ENCODE measurements at regions of chr3 and their contacts with region 1.

Region 1: DNA sequence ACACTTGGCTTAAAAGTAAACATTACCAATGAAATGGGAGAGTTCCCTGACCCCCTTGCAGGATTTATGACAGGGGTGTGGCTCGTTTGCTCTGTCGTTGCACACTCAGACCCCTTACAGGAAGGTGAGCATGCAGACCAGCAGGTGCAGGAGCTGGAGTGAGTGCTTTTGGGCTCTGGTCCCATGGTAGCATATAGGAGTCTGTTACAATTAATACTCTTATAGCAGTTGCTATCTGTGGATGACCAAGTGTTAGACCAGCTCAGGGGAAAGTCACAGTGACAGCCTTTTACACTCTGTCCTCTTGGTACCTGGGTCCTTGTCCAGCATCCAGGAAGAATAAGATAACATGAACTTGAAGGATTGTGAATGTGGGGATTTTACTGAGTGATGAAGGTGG is 1177.5 kb downstream of the NSUN3 start:
- DNase-seq: no peak
- ATAC-seq: no peak
- H3K4me3 ChIP-seq: no peak overlapping the region
- H3K4me3 Mint-ChIP-seq: no peak overlapping the region
- H3K27ac ChIP-seq: no peak overlapping the region
- H3K27ac Mint-ChIP-seq: no peak overlapping the region
- H3K4me1 ChIP-seq: no peaks in the 10 kb centered on the region
- H3K4me1 Mint-ChIP-seq: no peaks in the 10 kb centered on the region
- H3K27me3 ChIP-seq: no peaks in the 10 kb centered on the region
- H3K27me3 Mint-ChIP-seq: no peaks in the 10 kb centered on the region

Region 2: GRCh38 chr3:95254771-95255170 is 14.4 kb after region 1 on chr3:
- CTCF ChIA-PET with region 1: no interaction called
- POLR2A ChIA-PET with region 1: no interaction called
- intact Hi-C with region 1: loop called in 1 of 2 experiments (anchors 1 kb)
- DNase-seq: no peak
- ATAC-seq: no peak
- H3K4me3 ChIP-seq: no peak overlapping the region
- H3K4me3 Mint-ChIP-seq: no peak overlapping the region
- H3K27ac ChIP-seq: no peak overlapping the region
- H3K27ac Mint-ChIP-seq: no peak overlapping the region
- H3K4me1 ChIP-seq: no peaks in the 10 kb centered on the region
- H3K4me1 Mint-ChIP-seq: no peaks in the 10 kb centered on the region
- H3K27me3 ChIP-seq: no peaks in the 10 kb centered on the region
- H3K27me3 Mint-ChIP-seq: no peaks in the 10 kb centered on the region